Gastrocnemius medialis (tissue), 4 donors: ENCODE measurements at regions of chr9 and their contacts with region 1.

Region 1: DNA sequence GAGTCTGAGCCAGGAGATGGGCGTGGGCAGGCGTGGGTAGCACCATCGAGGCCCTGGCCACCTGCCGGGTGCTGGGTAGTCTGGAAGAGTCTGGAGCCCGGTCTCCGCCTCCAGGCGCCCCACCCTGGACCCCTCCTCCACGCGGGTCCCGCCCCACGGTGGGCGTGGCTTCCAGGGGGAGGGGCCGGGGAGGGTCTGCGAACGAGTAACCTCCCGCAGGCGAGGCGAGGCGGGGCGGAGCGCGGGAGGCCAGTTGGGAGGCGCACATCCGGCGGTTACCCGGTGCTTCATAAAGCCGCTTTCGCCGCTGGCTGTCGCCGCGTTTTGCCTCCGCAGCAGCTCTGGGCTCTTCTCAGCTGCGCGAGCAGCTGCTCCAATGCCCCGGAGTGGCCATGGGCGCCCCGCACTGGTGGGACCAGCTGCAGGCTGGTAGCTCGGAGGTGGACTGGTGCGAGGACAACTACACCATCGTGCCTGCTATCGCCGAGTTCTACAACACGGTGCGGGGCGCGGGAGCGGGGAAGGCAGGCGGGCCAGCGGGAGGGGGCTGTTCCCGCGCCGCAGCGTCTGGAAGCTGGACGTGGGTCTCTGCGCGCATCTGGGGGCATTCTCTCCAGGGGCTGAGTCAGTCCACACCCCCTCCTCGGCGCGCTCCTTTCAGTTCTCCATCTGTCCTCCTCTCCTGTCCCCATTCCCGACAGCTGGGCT is at the start of gene ACER2:
- DNase-seq: peak; percentile 87 to 89
- ATAC-seq: peak; percentile 86 to 87
- H3K4me3 ChIP-seq: peak within 1 kb of the TSS; percentile 84 to 97 (median 93)
- H3K27ac ChIP-seq: peak within 1 kb of the TSS; percentile 82 to 89 (median 88)
- H3K4me1 ChIP-seq: peaks cover 13 to 16% of the 10 kb centered on the region in 2 donors
- H3K27me3 ChIP-seq: no peaks in the 10 kb centered on the region
- CTCF ChIP-seq: peak in 1 of 5 experiments; percentile 10
- POLR2A ChIP-seq: peak; percentile 67 to 93
- total RNA-seq, gene ACER2: 1.7 to 4.8 (median 2.4) TPM

Region 2: DNA sequence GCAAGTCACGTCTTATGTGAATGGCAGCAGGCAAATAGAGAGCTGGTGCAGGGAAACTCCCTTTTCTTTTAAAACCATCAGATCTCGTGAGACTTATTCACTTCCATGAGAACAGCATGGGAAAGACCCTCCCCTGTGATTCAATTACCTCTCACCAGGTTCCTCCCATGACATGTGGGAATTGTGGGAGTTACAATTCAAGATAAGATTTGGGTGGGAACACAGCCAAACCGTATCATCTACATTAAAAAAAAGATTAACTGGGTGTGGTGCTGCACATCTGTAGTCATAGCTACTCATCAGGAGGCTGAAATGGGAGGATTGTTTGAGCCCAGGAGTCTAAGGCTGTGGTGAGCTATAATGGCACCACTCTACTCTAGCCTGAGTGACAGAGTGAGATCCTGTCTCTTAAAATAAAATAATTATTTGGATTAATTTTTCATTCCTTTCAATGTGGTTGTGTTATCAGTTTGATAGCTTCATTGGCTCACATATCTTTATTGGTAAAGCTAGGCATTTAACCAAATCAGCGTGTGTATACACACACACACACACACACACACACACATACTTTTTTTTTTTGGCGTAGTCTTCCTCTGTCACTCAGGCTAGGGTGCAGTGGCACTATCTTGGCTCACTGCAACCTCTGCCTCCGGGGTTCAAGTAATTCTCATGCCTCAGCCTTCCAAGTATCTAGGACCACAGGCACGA is 156.5 kb before region 1 on chr9:
- in situ Hi-C with region 1: no loop called
- intact Hi-C with region 1: no loop called
- DNase-seq: no peak
- ATAC-seq: no peak
- H3K4me3 ChIP-seq: no peak overlapping the region
- H3K27ac ChIP-seq: no peak overlapping the region
- H3K4me1 ChIP-seq: peaks cover 14 to 16% of the 10 kb centered on the region in 2 donors
- H3K27me3 ChIP-seq: no peaks in the 10 kb centered on the region
- CTCF ChIP-seq: no peak
- POLR2A ChIP-seq: no peak

Region 3: GRCh38 chr9:19313573-19313972 is 95.3 kb before region 1 on chr9:
- in situ Hi-C with region 1: loop called in 1 of 4 experiments (anchors 25 kb)
- intact Hi-C with region 1: no loop called
- DNase-seq: no peak
- ATAC-seq: no peak
- H3K4me3 ChIP-seq: no peak overlapping the region
- H3K27ac ChIP-seq: no peak overlapping the region
- H3K4me1 ChIP-seq: no peaks in the 10 kb centered on the region
- H3K27me3 ChIP-seq: no peaks in the 10 kb centered on the region
- CTCF ChIP-seq: no peak
- POLR2A ChIP-seq: no peak

Region 4: DNA sequence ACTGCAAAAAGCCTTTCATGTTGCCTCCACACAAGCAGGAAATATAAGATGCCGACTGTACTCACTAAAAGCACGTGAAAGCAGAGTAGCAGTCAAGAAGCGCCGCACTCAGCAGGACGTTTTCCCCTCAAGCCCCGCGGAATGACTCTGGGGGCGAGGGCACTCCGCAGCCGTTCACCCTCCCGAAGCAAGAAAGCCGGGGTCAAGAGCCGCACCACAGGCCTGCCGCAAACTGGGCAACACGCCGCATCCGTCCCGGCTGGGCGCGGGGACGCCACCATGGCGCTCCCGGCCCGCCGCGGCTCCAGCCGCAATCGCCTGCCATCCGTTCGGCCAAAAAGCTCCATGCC is 29.2 kb before region 1 on chr9:
- in situ Hi-C with region 1: no loop called
- intact Hi-C with region 1: loop called (anchors 2 kb)
- DNase-seq: peak in 1 of 2 donors; percentile 9
- ATAC-seq: peak; percentile 43 to 56
- H3K4me3 ChIP-seq: peak overlapping the region; percentile 79 to 93 (median 90)
- H3K27ac ChIP-seq: peak overlapping the region; percentile 89 to 97 (median 95)
- H3K4me1 ChIP-seq: peaks cover 21 to 27% of the 10 kb centered on the region in 2 donors
- H3K27me3 ChIP-seq: no peaks in the 10 kb centered on the region
- CTCF ChIP-seq: no peak
- POLR2A ChIP-seq: no peak